Heart right ventricle (tissue), 16 donors: ENCODE measurements at regions of chr19 and their contacts with region 1.

Region 1: DNA sequence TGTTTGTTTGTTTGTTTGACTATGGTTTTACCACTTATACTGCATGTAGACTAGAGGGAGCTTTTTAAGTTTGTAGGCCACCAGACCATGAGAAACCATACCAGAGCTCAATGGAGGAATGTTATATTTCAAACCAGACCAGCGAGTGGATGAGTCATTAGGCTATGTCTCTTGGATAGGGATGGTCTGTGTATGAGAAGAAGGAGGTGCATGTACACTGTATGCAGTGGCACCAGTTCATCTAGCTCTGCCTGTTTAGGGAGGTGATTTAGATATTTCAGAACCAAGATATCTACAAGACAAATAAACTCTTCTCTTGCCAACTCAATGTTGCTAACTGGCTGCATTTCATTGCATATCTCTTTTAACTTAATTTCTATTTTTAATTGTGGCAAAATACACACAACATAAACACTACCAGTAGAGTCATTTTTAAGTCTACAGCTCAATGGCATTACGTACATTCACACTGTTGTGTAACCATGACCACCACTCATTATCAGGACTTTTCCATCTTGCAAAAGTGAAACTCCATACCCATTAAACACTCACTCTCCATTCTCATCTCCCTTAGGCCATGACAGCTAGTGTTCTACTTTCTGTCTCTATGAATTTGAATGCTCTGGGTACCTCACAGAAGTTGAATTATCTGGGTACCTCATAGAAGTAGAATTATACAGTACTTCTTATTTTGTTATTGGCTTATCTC is 29.2 kb downstream of the SYDE1 start:
- DNase-seq: no peak
- ATAC-seq: no peak
- H3K4me3 ChIP-seq: no peak overlapping the region
- H3K27ac ChIP-seq: no peak overlapping the region
- H3K4me1 ChIP-seq: no peaks in the 10 kb centered on the region
- H3K27me3 ChIP-seq: no peaks in the 10 kb centered on the region
- CTCF ChIP-seq: no peak

Region 2: GRCh38 chr19:15101479-15102082 is 34.8 kb before region 1 on chr19:
- intact Hi-C with region 1: loop called in 1 of 10 experiments (anchors 5 kb)
- DNase-seq: no peak
- ATAC-seq: peak; percentile 41 to 79 (median 62)
- H3K4me3 ChIP-seq: no peak overlapping the region
- H3K27ac ChIP-seq: peak overlapping the region in 2 of 10 donors; percentile 34 to 44
- H3K4me1 ChIP-seq: peaks cover 0 to 11% (median 0%) of the 10 kb centered on the region in 9 donors
- H3K27me3 ChIP-seq: peaks cover 0 to 8% (median 0%) of the 10 kb centered on the region in 7 donors
- CTCF ChIP-seq: peak; percentile 46 to 77 (median 75)